ENCODE measurements at regions of chr15 and their contacts with region 1.

Region 1: GRCh38 chr15:34520566-34520965 is 62.9 kb downstream of the GOLGA8B start:
- DNase-seq: no peak
- H3K4me3 ChIP-seq: no peak overlapping the region
- H3K27ac ChIP-seq: no peak overlapping the region
- H3K4me1 ChIP-seq: no peaks in the 10 kb centered on the region
- H3K27me3 ChIP-seq: peaks cover 0 to 12% (median 4%) of the 10 kb centered on the region in 5 experiments

Region 2: GRCh38 chr15:34501131-34501530 is 19.4 kb before region 1 on chr15:
- CTCF ChIA-PET with region 1: no interaction called
- POLR2A ChIA-PET with region 1: no interaction called
- DNase-seq: no peak
- H3K4me3 ChIP-seq: no peak overlapping the region
- H3K27ac ChIP-seq: no peak overlapping the region
- H3K4me1 ChIP-seq: no peaks in the 10 kb centered on the region
- H3K27me3 ChIP-seq: peaks cover 0 to 44% (median 13%) of the 10 kb centered on the region in 5 experiments

Region 3: GRCh38 chr15:34587717-34588674 is 67.4 kb after region 1 on chr15:
- CTCF ChIA-PET with region 1: interaction called, 11 read pairs
- POLR2A ChIA-PET with region 1: no interaction called
- DNase-seq: peak; percentile 82 to 87 (median 86)
- H3K4me3 ChIP-seq: peak overlapping the region in 6 of 7 experiments; percentile 33 to 77 (median 52)
- H3K27ac ChIP-seq: peak overlapping the region in 1 of 2 experiments; percentile 67
- H3K4me1 ChIP-seq: peaks cover 0 to 11% (median 8%) of the 10 kb centered on the region in 4 experiments
- H3K27me3 ChIP-seq: peaks cover 0 to 7% (median 0%) of the 10 kb centered on the region in 5 experiments

Measured in common myeloid progenitor, CD34-positive (primary cell).